Mammary epithelial cell (primary cell): ENCODE measurements at regions of chr7 and their contacts with region 1.

Region 1: DNA sequence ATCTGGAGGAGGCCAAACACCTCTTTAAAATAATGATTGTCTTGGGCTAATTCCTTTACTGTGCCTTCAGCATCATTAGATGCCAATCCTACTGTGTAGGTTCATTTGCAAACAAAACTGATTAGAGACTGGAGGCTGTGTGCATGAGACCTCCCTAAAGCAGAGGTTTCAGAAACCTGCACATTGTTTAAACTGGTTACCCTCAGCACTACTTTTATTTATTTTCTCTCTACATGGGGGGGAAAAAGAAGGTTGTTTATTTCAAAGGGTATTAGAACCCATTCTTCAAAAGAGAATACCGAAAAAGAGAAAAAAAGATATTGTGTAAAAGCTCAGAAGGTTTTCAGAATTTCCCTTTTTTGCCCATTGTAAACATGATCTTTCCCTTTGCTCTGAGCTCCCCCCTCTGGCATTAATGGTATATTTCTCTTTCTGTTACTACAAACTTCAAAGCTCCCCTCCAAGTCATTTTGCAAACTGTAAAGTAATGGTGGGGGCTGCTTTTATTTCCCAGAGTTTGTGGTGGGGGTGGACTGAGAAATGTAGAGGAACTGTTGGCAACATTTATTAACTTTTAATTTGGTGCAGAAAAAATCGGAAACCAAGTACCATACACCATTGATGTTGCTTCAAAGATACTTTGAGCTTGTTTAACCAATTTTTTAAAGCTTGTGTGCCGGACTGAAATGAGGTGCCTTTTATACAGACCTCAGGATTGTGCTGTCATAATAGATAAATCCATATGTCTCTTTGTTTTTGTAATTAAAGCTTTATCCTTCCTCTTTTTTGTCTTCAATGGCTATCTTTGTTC is 181.4 kb downstream of the EXOC4 start:
- DNase-seq: peak; percentile 8
- H3K4me3 ChIP-seq: no peak overlapping the region
- H3K27ac ChIP-seq: no peak overlapping the region
- H3K4me1 ChIP-seq: peaks cover 27% of the 10 kb centered on the region
- H3K27me3 ChIP-seq: no peaks in the 10 kb centered on the region
- CTCF ChIP-seq: peak; percentile 35 to 55

Region 2: DNA sequence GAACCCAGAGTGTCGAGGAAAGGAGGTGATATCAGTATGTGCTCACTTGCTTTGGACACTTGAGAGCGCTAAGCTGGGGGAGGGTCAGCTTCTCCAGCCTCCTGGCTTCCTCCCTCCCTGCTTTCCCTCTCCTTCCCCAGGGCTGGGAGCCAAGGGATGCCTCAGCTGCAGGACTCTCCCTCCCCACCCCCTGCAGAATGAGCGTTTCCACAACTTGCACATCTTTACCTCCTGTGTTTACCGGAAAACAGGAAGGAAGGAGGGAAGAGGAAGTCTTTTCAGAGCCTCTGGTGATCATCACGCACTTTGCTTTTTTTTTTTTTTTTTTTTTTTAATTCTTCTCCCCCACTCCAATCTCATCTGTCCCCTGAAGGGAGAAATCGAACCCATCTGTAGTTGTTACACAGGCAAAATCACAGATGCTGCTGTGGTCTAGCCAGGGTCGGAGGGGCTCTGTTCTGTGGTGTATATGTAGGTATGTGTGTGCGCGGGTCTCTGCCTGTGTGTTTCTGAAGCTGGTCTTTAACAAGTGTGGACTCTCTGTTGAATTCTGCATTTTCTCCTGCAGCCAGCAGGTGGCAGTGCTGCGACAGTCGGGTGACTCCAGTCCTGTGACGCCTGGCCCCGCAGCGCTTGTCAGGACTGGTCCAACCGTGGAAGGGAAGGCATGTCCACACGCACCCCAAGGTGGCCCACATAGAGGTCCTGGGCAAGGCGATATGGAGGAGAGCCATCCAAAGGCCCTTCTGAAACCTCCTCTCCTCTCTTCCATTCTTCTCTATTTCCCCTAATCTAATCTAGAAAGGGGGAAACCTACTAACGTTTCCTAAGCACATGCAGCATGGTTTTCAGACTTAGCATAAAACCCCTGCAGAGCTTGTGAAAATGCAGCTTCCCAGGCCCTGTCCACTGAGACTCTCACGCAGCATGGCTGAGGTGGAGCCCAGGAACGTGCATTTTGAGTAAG is 1115.6 kb before region 1 on chr7:
- CTCF ChIA-PET with region 1: no interaction called
- dilution Hi-C with region 1: no loop called
- in situ Hi-C with region 1: no loop called
- intact Hi-C with region 1: loop called (anchors 10 kb)
- DNase-seq: peak; percentile 61
- H3K4me3 ChIP-seq: no peak overlapping the region
- H3K27ac ChIP-seq: no peak overlapping the region
- H3K4me1 ChIP-seq: peaks cover 3% of the 10 kb centered on the region
- H3K27me3 ChIP-seq: no peaks in the 10 kb centered on the region
- CTCF ChIP-seq: peak; percentile 87 to 88

Region 3: GRCh38 chr7:132709971-132710567 is 724.2 kb before region 1 on chr7:
- CTCF ChIA-PET with region 1: no interaction called
- dilution Hi-C with region 1: no loop called
- in situ Hi-C with region 1: loop called in 1 of 2 experiments (anchors 10 kb)
- intact Hi-C with region 1: loop called (anchors 1 kb)
- DNase-seq: peak; percentile 22
- H3K4me3 ChIP-seq: no peak overlapping the region
- H3K27ac ChIP-seq: no peak overlapping the region
- H3K4me1 ChIP-seq: no peaks in the 10 kb centered on the region
- H3K27me3 ChIP-seq: peaks cover 1% of the 10 kb centered on the region
- CTCF ChIP-seq: peak; percentile 49 to 65

Region 4: GRCh38 chr7:133140994-133141595 is 293.2 kb before region 1 on chr7:
- CTCF ChIA-PET with region 1: no interaction called
- dilution Hi-C with region 1: no loop called
- in situ Hi-C with region 1: no loop called
- intact Hi-C with region 1: no loop called
- DNase-seq: no peak
- H3K4me3 ChIP-seq: no peak overlapping the region
- H3K27ac ChIP-seq: no peak overlapping the region
- H3K4me1 ChIP-seq: no peaks in the 10 kb centered on the region
- H3K27me3 ChIP-seq: peaks cover 2% of the 10 kb centered on the region
- CTCF ChIP-seq: no peak

Region 5: GRCh38 chr7:133230591-133231194 is 203.6 kb before region 1 on chr7:
- CTCF ChIA-PET with region 1: no interaction called
- dilution Hi-C with region 1: no loop called
- in situ Hi-C with region 1: no loop called
- intact Hi-C with region 1: loop called (anchors 1 kb)
- DNase-seq: peak; percentile 32
- H3K4me3 ChIP-seq: no peak overlapping the region
- H3K27ac ChIP-seq: no peak overlapping the region
- H3K4me1 ChIP-seq: no peaks in the 10 kb centered on the region
- H3K27me3 ChIP-seq: no peaks in the 10 kb centered on the region
- CTCF ChIP-seq: peak; percentile 74 to 85

Region 6: GRCh38 chr7:133633062-133633461 is 198.8 kb after region 1 on chr7:
- CTCF ChIA-PET with region 1: no interaction called
- dilution Hi-C with region 1: no loop called
- in situ Hi-C with region 1: no loop called
- intact Hi-C with region 1: loop called (anchors 10 kb)
- DNase-seq: peak; percentile 88
- H3K4me3 ChIP-seq: peak overlapping the region in 2 of 3 experiments; percentile 8 to 33
- H3K27ac ChIP-seq: peak overlapping the region; percentile 47
- H3K4me1 ChIP-seq: peaks cover 8% of the 10 kb centered on the region
- H3K27me3 ChIP-seq: no peaks in the 10 kb centered on the region
- CTCF ChIP-seq: no peak

Region 7: DNA sequence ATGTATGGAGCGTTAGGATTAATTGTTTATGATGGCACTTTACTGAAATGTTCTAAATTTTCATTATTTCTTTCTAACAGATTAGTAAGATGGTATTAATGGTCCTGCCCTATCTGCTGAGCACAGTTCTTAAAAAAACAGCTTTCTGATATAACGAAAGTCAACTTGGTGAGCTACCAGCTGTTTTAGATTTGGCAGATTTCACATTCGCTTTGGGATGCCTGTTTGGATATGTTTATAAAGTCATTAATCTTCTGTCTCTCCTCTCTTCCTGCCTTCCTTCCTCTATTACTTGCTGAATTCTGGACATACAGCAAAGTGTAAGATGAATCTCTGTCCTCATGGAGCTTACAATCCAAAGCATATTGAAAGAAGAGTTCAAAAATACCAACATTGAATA is 296.1 kb after region 1 on chr7:
- CTCF ChIA-PET with region 1: interaction called, 16 read pairs
- dilution Hi-C with region 1: no loop called
- in situ Hi-C with region 1: no loop called
- intact Hi-C with region 1: no loop called
- DNase-seq: no peak
- H3K4me3 ChIP-seq: no peak overlapping the region
- H3K27ac ChIP-seq: no peak overlapping the region
- H3K4me1 ChIP-seq: no peaks in the 10 kb centered on the region
- H3K27me3 ChIP-seq: no peaks in the 10 kb centered on the region
- CTCF ChIP-seq: no peak

Region 8: GRCh38 chr7:133997463-133997862 is 563.2 kb after region 1 on chr7:
- CTCF ChIA-PET with region 1: no interaction called
- dilution Hi-C with region 1: no loop called
- in situ Hi-C with region 1: no loop called
- intact Hi-C with region 1: loop called (anchors 10 kb)
- DNase-seq: no peak
- H3K4me3 ChIP-seq: no peak overlapping the region
- H3K27ac ChIP-seq: no peak overlapping the region
- H3K4me1 ChIP-seq: no peaks in the 10 kb centered on the region
- H3K27me3 ChIP-seq: no peaks in the 10 kb centered on the region
- CTCF ChIP-seq: no peak